Breast epithelium (tissue), 4 donors: ENCODE measurements at regions of chr12 and their contacts with region 1.

Region 1: GRCh38 chr12:129788506-129789084 is 115.2 kb downstream of the TMEM132D start:
- DNase-seq: no peak
- H3K4me3 ChIP-seq: no peak overlapping the region
- H3K27ac ChIP-seq: no peak overlapping the region
- H3K4me1 ChIP-seq: no peaks in the 10 kb centered on the region
- H3K27me3 ChIP-seq: no peaks in the 10 kb centered on the region
- CTCF ChIP-seq: no peak
- POLR2A ChIP-seq: no peak

Region 2: DNA sequence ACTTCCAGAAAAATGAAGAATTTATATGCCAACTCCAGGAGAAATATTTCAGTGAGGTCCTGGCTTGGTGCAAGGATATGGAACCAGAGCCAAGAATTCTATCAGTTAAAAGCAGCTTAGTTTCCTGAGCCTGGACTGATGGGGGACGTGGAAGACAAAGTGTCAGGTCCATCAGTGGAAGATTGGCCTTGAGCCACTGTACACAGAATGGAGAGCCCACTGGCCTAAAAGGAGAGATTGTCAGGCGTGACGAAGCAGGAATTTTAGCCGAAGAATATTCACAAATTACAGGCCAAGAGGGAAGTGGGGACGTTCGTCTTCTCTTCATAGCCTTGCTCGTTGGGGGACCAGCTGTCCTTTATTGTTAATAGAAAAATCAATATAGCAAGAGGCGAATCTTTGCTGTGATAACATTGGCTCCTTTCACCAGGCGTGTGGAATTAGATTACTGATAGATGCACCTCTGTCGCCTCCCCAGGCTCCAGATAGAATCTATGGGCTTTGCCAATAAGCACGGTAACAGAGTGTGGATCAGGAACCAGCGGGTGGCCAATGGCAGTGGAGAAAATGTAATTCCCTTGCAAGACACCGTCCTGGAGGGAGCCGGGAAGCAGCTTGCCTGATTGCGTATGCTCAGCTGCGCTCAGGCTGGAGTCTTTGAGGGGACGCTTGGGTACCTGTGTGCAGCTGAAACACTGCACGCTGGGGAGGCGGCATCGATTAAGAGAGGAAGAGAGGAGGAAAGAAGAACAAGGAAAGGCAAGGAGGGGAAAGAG is 1465.3 kb before region 1 on chr12:
- intact Hi-C with region 1: loop called (anchors 10 kb)
- DNase-seq: no peak
- H3K4me3 ChIP-seq: no peak overlapping the region
- H3K27ac ChIP-seq: no peak overlapping the region
- H3K4me1 ChIP-seq: no peaks in the 10 kb centered on the region
- H3K27me3 ChIP-seq: peaks cover 0 to 3% of the 10 kb centered on the region in 2 donors
- CTCF ChIP-seq: no peak
- POLR2A ChIP-seq: no peak

Region 3: GRCh38 chr12:129807136-129807535 is 18.5 kb after region 1 on chr12:
- intact Hi-C with region 1: no loop called
- DNase-seq: no peak
- H3K4me3 ChIP-seq: no peak overlapping the region
- H3K27ac ChIP-seq: no peak overlapping the region
- H3K4me1 ChIP-seq: no peaks in the 10 kb centered on the region
- H3K27me3 ChIP-seq: no peaks in the 10 kb centered on the region
- CTCF ChIP-seq: no peak
- POLR2A ChIP-seq: no peak

Region 4: DNA sequence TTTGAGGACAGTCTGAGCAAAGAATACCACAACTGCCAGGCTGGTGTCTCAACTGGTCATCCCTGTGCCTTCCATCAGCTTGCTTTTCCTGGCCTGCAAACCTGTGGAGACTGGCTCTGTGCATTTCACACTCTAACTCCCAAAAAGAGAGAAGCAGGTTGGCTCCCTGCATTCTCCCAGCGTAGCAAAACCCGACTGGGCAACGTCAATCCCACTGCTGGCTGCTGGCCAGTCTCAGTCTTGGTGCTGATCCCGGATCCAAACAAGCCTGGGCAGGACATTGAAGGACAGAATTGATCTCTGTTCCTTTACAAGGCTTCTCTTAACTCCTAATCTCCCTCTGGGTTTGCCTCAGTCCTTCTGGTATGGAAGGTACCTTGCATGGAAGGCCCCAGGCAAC is 439.0 kb after region 1 on chr12:
- intact Hi-C with region 1: loop called (anchors 5 kb)
- DNase-seq: peak in 1 of 2 donors; percentile 68
- H3K4me3 ChIP-seq: no peak overlapping the region
- H3K27ac ChIP-seq: peak overlapping the region in 1 of 2 donors; percentile 26
- H3K4me1 ChIP-seq: no peaks in the 10 kb centered on the region
- H3K27me3 ChIP-seq: peaks cover 0 to 10% of the 10 kb centered on the region in 2 donors
- CTCF ChIP-seq: no peak
- POLR2A ChIP-seq: no peak